Prostate gland (tissue), 2 donors: ENCODE measurements at regions of chr7 and their contacts with region 1.

Region 1: GRCh38 chr7:87059525-87060287 is at the start of gene ELAPOR2:
- DNase-seq: peak; percentile 47
- H3K4me3 ChIP-seq: peak within 1 kb of the TSS; percentile 50 to 65
- H3K27ac ChIP-seq: peak within 1 kb of the TSS; percentile 51 to 64
- H3K4me1 ChIP-seq: no peaks in the 10 kb centered on the region
- H3K27me3 ChIP-seq: no peaks in the 10 kb centered on the region
- CTCF ChIP-seq: peak in 3 of 4 experiments; percentile 17 to 51 (median 49)
- POLR2A ChIP-seq: peak; percentile 21
- total RNA-seq, gene ELAPOR2: 15.5 to 19.9 TPM

Region 2: GRCh38 chr7:86949052-86949778 is 110.5 kb before region 1 on chr7:
- intact Hi-C with region 1: loop called (anchors 5 kb)
- DNase-seq: no peak
- H3K4me3 ChIP-seq: no peak overlapping the region
- H3K27ac ChIP-seq: no peak overlapping the region
- H3K4me1 ChIP-seq: no peaks in the 10 kb centered on the region
- H3K27me3 ChIP-seq: no peaks in the 10 kb centered on the region
- CTCF ChIP-seq: no peak
- POLR2A ChIP-seq: no peak

Region 3: GRCh38 chr7:86991771-86992191 is 67.9 kb before region 1 on chr7:
- intact Hi-C with region 1: no loop called
- DNase-seq: no peak
- H3K4me3 ChIP-seq: no peak overlapping the region
- H3K27ac ChIP-seq: no peak overlapping the region
- H3K4me1 ChIP-seq: no peaks in the 10 kb centered on the region
- H3K27me3 ChIP-seq: no peaks in the 10 kb centered on the region
- CTCF ChIP-seq: no peak
- POLR2A ChIP-seq: no peak

Region 4: GRCh38 chr7:87219545-87220025 is 159.9 kb after region 1 on chr7 and contains the start of gene TMEM243:
- intact Hi-C with region 1: loop called (anchors 10 kb)
- DNase-seq: peak; percentile 73
- H3K4me3 ChIP-seq: peak within 1 kb of the TSS; percentile 62 to 85
- H3K27ac ChIP-seq: peak within 1 kb of the TSS; percentile 81 to 84
- H3K4me1 ChIP-seq: no peaks in the 10 kb centered on the region
- H3K27me3 ChIP-seq: no peaks in the 10 kb centered on the region
- CTCF ChIP-seq: peak in 3 of 4 experiments; percentile 14 to 43 (median 23)
- POLR2A ChIP-seq: peak; percentile 63
- total RNA-seq, gene TMEM243: 23.3 to 39.7 TPM